ENCODE measurements at regions of chr2 and their contacts with region 1.

Region 1: DNA sequence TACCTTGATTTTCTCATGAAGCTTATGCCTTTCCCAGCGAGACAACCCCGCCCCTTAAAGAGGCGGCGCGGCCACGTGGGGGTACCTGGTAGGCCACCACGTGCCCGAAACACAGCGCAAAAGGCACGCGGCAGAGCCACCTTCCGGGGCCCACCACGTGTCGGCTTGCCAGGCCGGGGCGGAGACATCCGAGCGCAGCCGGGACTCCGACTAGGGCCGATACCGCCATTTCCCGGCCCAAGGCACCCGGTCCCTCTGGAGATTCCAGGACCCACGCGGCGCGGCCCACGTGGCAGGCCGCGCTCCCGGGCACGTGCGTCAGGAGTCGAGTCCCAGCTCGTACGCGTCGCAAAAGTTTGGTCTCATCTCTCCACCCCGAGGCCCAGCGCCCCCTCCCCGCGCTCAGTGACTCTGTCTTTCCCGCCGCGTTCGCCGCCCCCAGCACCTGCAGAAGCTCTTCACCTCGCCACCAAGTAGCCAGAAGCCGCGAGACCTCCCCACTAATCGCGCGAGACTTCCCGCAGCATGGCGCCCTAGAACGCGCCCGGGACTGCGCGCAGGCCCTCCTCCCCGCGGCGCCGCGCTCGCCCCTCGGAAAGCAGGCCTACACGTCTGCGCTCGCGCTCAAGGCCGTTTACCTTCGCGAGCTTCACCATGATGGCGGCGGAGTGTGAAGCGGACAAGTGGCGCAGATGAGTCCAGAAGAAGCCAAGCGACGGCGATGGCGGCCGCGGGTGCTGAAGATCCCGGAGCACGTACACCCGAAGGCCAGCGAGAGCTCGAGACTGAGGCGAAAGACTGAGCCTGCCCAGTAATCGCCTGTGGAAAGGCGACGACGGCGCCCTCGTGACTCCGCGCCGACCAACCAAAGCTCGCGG is at the start of gene NCL:
- DNase-seq: peak; percentile 60 to 77 (median 67)
- ATAC-seq: peak; percentile 94
- H3K4me3 ChIP-seq: peak within 1 kb of the TSS; percentile 77
- H3K27ac ChIP-seq: peak within 1 kb of the TSS; percentile 96
- H3K4me1 ChIP-seq: peaks cover 13 to 32% of the 10 kb centered on the region in 2 experiments; a peak in 4 of 5 replicates
- H3K27me3 ChIP-seq: no peaks in the 10 kb centered on the region
- CTCF ChIP-seq: no peak
- EP300 ChIP-seq: no peak
- POLR2A ChIP-seq: peak; percentile 99
- RAD21 ChIP-seq: no peak
- polyA plus RNA-seq, gene NCL: 80.9 to 92.9 TPM

Region 2: DNA sequence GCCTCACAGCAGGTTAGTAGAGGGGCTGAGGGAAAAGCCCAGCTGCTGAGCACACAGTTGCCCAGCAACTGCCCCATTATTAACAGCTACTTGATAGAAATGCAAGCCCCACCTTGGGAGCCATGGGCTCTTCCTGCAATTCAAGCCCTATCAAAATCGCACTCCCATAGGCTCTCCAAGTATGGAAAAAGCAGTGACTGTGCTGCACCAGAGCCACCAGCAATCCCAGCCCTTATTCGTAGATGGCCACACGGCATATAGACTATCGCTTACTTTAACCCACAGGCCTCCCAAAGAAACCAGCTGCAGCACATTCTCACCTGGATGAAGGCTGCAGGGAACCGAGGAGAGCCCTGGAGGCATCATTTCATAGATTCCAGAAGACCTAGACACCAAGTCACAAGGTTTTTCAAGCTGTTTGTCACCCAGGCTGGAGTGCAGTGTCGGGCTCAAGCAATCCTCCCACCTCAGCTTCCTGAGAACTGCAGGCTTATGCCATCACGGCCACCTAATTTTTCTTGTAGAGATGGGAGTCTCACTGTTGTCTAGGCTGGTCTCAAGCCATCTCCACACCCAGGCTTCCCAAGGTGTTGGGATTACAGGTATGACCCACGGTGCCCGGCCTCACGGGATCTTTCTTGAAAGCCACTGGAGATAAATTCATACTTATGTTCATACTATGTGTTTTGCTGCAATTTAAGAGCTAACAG is 11.0 kb before region 1 on chr2:
- CTCF ChIA-PET with region 1: no interaction called
- POLR2A ChIA-PET with region 1: interaction called, 95 read pairs
- in situ Hi-C with region 1: no loop called
- intact Hi-C with region 1: no loop called
- DNase-seq: peak in 1 of 4 experiments; percentile 33
- ATAC-seq: peak; percentile 60
- H3K4me3 ChIP-seq: no peak overlapping the region
- H3K27ac ChIP-seq: no peak overlapping the region; the same call in 2 of the 3 replicates
- H3K4me1 ChIP-seq: no peaks in the 10 kb centered on the region; a peak in 1 of 5 replicates
- H3K27me3 ChIP-seq: no peaks in the 10 kb centered on the region
- CTCF ChIP-seq: no peak
- EP300 ChIP-seq: no peak
- POLR2A ChIP-seq: peak; percentile 69; the same call in 1 of the 2 replicates
- RAD21 ChIP-seq: no peak

Region 3: DNA sequence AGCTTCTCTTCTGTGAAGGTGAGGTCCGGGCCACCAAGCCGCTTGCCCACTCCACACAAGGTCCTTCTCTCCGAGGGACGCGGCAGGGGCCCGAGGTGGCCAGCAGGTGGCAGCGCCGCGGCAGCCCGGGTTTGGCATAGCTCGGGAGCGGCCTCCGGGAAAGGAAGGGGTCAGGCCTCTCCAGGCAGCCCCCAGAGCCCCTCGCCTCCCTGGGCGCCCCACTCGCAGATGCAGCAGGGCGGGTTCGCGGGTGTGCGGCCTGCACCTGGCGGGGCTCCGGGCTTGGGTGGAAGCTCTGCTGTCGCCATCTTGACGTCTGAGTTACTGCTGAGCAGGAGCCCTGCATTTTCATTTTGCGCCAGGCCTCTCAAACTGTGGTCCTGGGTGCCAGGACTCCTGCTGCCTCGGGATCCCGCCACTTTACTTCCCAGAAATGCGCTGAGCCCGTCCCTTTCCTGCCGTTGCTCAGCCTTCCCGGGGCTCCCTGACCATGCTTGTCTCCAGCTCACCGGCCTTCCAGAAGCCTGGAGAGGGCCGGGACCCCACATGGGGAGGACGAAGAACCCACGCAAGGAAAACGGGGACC is 19.0 kb after region 1 on chr2:
- CTCF ChIA-PET with region 1: no interaction called
- POLR2A ChIA-PET with region 1: interaction called, 74 read pairs
- in situ Hi-C with region 1: no loop called
- intact Hi-C with region 1: no loop called
- DNase-seq: peak; percentile 60 to 77 (median 70)
- ATAC-seq: peak; percentile 95
- H3K4me3 ChIP-seq: no peak overlapping the region
- H3K27ac ChIP-seq: no peak overlapping the region
- H3K4me1 ChIP-seq: peaks cover 0 to 15% of the 10 kb centered on the region in 2 experiments; a peak in 2 of 5 replicates
- H3K27me3 ChIP-seq: no peaks in the 10 kb centered on the region
- CTCF ChIP-seq: peak; percentile 68 to 76 (median 75)
- EP300 ChIP-seq: no peak
- POLR2A ChIP-seq: no peak
- RAD21 ChIP-seq: peak; percentile 37 to 41

Region 4: GRCh38 chr2:231514103-231514950 is 50.4 kb after region 1 on chr2:
- CTCF ChIA-PET with region 1: no interaction called
- POLR2A ChIA-PET with region 1: interaction called, 10 read pairs
- in situ Hi-C with region 1: no loop called
- intact Hi-C with region 1: no loop called
- DNase-seq: peak; percentile 97 to 99 (median 98)
- ATAC-seq: peak; percentile 99
- H3K4me3 ChIP-seq: peak overlapping the region; percentile 58
- H3K27ac ChIP-seq: peak overlapping the region; percentile 93
- H3K4me1 ChIP-seq: peaks cover 9 to 13% of the 10 kb centered on the region in 2 experiments; a peak in 4 of 5 replicates
- H3K27me3 ChIP-seq: no peaks in the 10 kb centered on the region; a peak in 1 of 5 replicates
- CTCF ChIP-seq: no peak
- EP300 ChIP-seq: no peak
- POLR2A ChIP-seq: peak; percentile 90
- RAD21 ChIP-seq: no peak

Region 5: GRCh38 chr2:231786177-231786916 is 322.4 kb after region 1 on chr2 and contains the start of gene COPS7B:
- CTCF ChIA-PET with region 1: no interaction called
- POLR2A ChIA-PET with region 1: no interaction called
- in situ Hi-C with region 1: no loop called
- intact Hi-C with region 1: loop called (anchors 10 kb)
- DNase-seq: peak; percentile 60 to 85 (median 72)
- ATAC-seq: peak; percentile 88
- H3K4me3 ChIP-seq: peak within 1 kb of the TSS; percentile 99
- H3K27ac ChIP-seq: peak within 1 kb of the TSS; percentile 76
- H3K4me1 ChIP-seq: peaks cover 9 to 13% of the 10 kb centered on the region in 2 experiments; a peak in 3 of 5 replicates
- H3K27me3 ChIP-seq: no peaks in the 10 kb centered on the region
- CTCF ChIP-seq: peak; percentile 55 to 71 (median 65)
- EP300 ChIP-seq: no peak; the same call in 1 of the 2 replicates
- POLR2A ChIP-seq: peak; percentile 67; the same call in 1 of the 2 replicates
- RAD21 ChIP-seq: peak in 1 of 2 experiments; percentile 30; a peak in 1 of 4 replicates
- polyA plus RNA-seq, gene COPS7B: 6.0 to 8.3 TPM

Region 6: DNA sequence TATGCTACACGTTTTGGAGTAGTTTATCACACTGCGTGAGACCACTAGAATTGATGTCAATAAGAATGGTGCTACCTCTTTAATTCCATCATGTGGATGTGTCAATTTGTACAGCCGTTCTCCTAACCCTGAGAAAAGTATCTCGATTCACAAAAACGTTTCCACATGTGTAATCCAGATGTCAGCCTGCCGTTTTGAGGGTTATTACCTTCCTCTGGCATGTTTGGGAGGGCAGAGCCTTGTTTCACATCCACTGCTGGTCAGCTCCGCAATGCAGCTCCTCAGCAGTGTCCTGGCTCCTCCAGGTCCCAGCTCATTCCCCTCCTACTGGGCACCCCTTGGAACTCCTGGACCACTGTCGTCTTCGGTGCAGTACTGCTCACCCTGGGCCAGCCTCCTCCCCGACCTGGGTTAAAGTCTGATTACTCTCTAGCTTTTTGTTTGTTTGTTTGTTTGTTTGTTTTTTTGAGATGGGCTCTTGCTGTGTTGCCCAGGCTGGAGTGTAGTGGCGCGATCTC is 356.9 kb after region 1 on chr2:
- CTCF ChIA-PET with region 1: no interaction called
- POLR2A ChIA-PET with region 1: no interaction called
- in situ Hi-C with region 1: no loop called
- intact Hi-C with region 1: no loop called
- DNase-seq: no peak
- ATAC-seq: no peak
- H3K4me3 ChIP-seq: no peak overlapping the region
- H3K27ac ChIP-seq: no peak overlapping the region
- H3K4me1 ChIP-seq: no peaks in the 10 kb centered on the region
- H3K27me3 ChIP-seq: peaks cover 0 to 4% of the 10 kb centered on the region in 2 experiments; a peak in 2 of 5 replicates
- CTCF ChIP-seq: no peak
- EP300 ChIP-seq: no peak
- POLR2A ChIP-seq: no peak
- RAD21 ChIP-seq: no peak

Measured in K562 (cell line).